ENCODE measurements at regions of chr12 and their contacts with region 1.

Region 1: GRCh38 chr12:96132819-96133218 is 61.4 kb upstream of the ELK3 start:
- DNase-seq: peak; percentile 45 to 55
- H3K4me3 ChIP-seq: no peak overlapping the region
- H3K4me3 Mint-ChIP-seq: no peak overlapping the region
- H3K27ac Mint-ChIP-seq: no peak overlapping the region
- H3K4me1 ChIP-seq: peaks cover 18% of the 10 kb centered on the region
- H3K4me1 Mint-ChIP-seq: peaks cover 13% of the 10 kb centered on the region
- H3K27me3 ChIP-seq: no peaks in the 10 kb centered on the region
- H3K27me3 Mint-ChIP-seq: no peaks in the 10 kb centered on the region
- CTCF ChIP-seq: peak; percentile 43 to 50

Region 2: DNA sequence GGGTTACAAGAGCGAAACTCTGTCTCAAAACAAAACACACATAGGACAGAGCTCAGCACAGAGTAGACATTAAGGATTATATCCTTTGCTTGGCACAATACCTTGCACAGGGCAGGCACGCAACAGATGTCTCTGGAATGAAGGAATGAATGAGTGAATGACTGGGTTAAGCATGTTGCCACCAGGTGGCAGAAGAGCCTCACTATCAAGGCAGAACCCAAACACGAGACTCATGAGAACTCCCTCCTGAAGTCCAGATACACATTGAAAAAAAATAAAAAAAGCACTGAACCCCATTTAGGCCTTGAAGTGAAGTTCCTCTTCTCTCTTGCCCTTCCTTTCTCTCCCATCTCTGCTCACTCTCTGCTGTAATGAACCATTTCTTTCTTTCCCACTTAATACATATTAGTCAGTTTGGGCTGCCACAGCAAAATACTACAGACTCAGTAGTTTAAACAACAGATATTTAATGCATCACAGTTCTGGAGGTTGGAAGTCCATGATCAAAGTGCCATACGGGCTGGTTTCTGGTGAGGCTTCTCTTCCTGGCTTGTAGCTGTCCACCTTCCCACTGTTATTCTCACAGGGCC is 70.9 kb before region 1 on chr12:
- CTCF ChIA-PET with region 1: no interaction called
- POLR2A ChIA-PET with region 1: no interaction called
- intact Hi-C with region 1: loop called (anchors 1 kb)
- DNase-seq: peak; percentile 74 to 76
- H3K4me3 ChIP-seq: no peak overlapping the region
- H3K4me3 Mint-ChIP-seq: no peak overlapping the region
- H3K27ac Mint-ChIP-seq: no peak overlapping the region
- H3K4me1 ChIP-seq: no peaks in the 10 kb centered on the region
- H3K4me1 Mint-ChIP-seq: no peaks in the 10 kb centered on the region
- H3K27me3 ChIP-seq: no peaks in the 10 kb centered on the region
- H3K27me3 Mint-ChIP-seq: no peaks in the 10 kb centered on the region
- CTCF ChIP-seq: peak; percentile 78 to 85

Region 3: DNA sequence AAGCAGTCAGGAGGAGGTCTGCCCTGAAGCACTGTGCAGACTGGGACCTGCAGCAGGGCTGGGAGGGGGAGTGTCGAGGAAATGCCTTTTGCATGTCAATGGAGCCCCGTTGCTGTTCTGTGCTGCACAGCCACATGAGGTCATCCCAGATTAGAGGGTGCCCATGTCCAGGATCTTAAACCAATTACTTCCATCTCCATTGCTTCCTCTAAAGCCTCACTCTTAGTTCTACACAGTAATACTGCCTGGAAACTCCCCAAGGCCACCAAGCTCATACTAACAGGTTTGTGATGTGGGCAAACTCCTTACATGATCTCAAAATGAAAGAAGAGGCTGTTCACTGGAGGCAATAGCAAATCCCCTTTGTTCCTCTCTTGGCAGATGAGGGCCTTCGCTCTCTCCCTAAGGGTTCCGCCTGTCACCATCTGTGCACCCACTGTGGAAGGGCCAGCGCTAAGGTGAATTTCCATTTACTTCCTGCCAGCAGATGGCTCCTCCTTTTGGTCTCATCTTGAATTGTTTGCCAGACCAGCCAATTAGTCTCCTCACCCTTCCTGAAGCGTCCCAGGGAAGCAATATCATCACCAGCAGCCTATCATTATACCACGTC is 62.0 kb before region 1 on chr12:
- CTCF ChIA-PET with region 1: interaction called, 3 read pairs
- POLR2A ChIA-PET with region 1: no interaction called
- intact Hi-C with region 1: loop called (anchors 2 kb)
- DNase-seq: peak in 1 of 2 experiments; percentile 19
- H3K4me3 ChIP-seq: no peak overlapping the region
- H3K4me3 Mint-ChIP-seq: no peak overlapping the region
- H3K27ac Mint-ChIP-seq: no peak overlapping the region
- H3K4me1 ChIP-seq: no peaks in the 10 kb centered on the region
- H3K4me1 Mint-ChIP-seq: peaks cover 7% of the 10 kb centered on the region
- H3K27me3 ChIP-seq: no peaks in the 10 kb centered on the region
- H3K27me3 Mint-ChIP-seq: no peaks in the 10 kb centered on the region
- CTCF ChIP-seq: peak in 1 of 2 experiments; percentile 13

Region 4: DNA sequence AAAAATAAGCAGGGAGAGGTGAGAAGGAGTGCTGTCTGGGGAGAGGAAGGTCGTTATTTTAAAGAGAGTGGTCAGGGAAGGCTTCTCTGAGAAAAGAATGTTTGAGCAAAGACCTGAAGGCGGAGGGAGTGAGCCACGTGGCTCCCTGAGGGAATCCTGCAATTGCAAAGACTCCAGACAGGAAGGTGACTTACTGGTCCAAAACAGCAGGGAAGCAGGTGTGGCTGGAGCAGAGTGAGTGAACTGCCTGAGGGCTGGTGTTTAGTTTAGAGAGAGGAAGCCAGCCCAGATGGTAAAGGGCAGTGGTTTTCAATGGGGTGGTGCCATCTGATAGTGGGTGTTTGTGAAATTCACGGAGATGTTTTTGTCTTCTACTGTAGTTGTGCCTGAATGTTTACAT is 38.6 kb before region 1 on chr12:
- CTCF ChIA-PET with region 1: no interaction called
- POLR2A ChIA-PET with region 1: no interaction called
- intact Hi-C with region 1: loop called (anchors 5 kb)
- DNase-seq: peak; percentile 28 to 53
- H3K4me3 ChIP-seq: no peak overlapping the region
- H3K4me3 Mint-ChIP-seq: no peak overlapping the region
- H3K27ac Mint-ChIP-seq: peak overlapping the region; percentile 7
- H3K4me1 ChIP-seq: no peaks in the 10 kb centered on the region
- H3K4me1 Mint-ChIP-seq: peaks cover 12% of the 10 kb centered on the region
- H3K27me3 ChIP-seq: no peaks in the 10 kb centered on the region
- H3K27me3 Mint-ChIP-seq: peaks cover 2% of the 10 kb centered on the region
- CTCF ChIP-seq: no peak

Region 5: GRCh38 chr12:96112733-96113132 is 20.1 kb before region 1 on chr12:
- CTCF ChIA-PET with region 1: no interaction called
- POLR2A ChIA-PET with region 1: no interaction called
- intact Hi-C with region 1: loop called (anchors 2 kb)
- DNase-seq: peak; percentile 51 to 59
- H3K4me3 ChIP-seq: no peak overlapping the region
- H3K4me3 Mint-ChIP-seq: peak overlapping the region; percentile 3
- H3K27ac Mint-ChIP-seq: no peak overlapping the region
- H3K4me1 ChIP-seq: peaks cover 18% of the 10 kb centered on the region
- H3K4me1 Mint-ChIP-seq: peaks cover 25% of the 10 kb centered on the region
- H3K27me3 ChIP-seq: no peaks in the 10 kb centered on the region
- H3K27me3 Mint-ChIP-seq: no peaks in the 10 kb centered on the region
- CTCF ChIP-seq: no peak

Measured in Caco-2 (cell line).